AG04450 (cell line): ENCODE measurements at regions of chr20 and their contacts with region 1.

Region 1: DNA sequence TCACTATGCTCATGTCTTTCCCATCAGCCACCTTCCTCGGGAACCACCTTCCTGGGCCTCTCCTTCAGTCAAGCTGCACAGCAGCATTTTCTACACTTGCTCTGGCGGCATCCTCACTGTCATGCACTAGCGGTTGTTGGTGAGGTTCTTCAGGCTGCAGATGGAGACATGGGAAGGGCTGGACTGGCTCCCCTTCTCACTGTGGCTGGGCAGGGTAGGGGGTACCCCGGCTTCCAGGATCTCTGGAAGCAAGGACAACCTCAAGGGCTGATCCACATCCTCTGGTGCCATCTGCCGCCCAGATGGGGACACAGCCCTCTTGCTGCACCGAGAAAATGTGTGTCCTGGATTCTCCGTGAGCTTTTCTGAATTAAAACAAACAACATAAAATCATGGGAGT is 180.1 kb upstream of the RNF24 start:
- DNase-seq: no peak
- H3K4me3 ChIP-seq: no peak overlapping the region
- H3K27ac ChIP-seq: no peak overlapping the region
- H3K27me3 ChIP-seq: no peaks in the 10 kb centered on the region
- CTCF ChIP-seq: peak; percentile 60

Region 2: DNA sequence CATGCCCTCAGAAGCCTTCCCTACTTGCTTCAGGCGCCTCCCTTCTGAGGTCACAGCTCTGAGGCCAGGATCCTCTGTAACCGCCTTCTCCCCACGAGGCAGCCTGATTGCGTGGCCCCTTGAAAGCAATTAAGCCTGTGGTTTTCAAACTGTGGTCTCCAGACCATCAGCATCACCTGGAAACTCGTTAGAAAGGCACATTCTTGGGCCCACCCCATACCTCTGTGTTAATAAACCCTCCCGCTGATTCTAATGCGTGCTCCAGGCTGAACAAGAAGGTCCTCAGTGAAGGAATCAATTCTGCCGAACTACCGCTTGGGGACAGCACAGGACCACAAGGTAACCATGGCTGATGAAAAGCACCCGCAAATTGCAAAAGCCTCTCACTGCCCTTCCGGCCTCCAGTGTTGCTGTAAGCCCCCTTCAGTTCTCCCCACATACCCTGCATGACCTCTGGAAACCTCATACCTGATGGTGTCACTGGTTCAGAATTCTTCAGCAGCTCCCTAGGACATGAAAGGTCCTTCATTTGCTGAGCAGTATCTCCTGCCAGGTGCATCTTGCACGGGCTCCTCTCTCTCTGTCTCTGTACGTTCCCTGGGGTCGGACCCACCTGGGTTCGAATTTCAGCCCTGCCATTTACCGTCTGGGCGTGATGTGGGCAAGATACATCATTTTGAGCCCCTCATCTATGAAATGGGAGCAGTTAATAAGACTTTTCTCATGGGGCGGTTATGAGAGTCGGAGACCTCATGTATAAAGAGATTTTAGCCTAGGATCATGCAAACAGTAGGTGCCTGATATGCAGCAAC is 86.8 kb before region 1 on chr20:
- CTCF ChIA-PET with region 1: interaction called, 18 read pairs
- POLR2A ChIA-PET with region 1: no interaction called
- DNase-seq: peak; percentile 76
- H3K4me3 ChIP-seq: no peak overlapping the region
- H3K27ac ChIP-seq: no peak overlapping the region
- H3K27me3 ChIP-seq: no peaks in the 10 kb centered on the region
- CTCF ChIP-seq: peak; percentile 100

Region 3: GRCh38 chr20:4217349-4217773 is 21.9 kb after region 1 on chr20:
- CTCF ChIA-PET with region 1: interaction called, 13 read pairs
- POLR2A ChIA-PET with region 1: no interaction called
- DNase-seq: no peak
- H3K4me3 ChIP-seq: no peak overlapping the region
- H3K27ac ChIP-seq: no peak overlapping the region
- H3K27me3 ChIP-seq: peaks cover 4% of the 10 kb centered on the region
- CTCF ChIP-seq: no peak